ENCODE measurements at regions of chr18 and their contacts with region 1.

Region 1: GRCh38 chr18:51107082-51107481 is 77.1 kb downstream of the SMAD4 start:
- DNase-seq: no peak
- H3K4me3 Mint-ChIP-seq: no peak overlapping the region
- H3K27ac Mint-ChIP-seq: peak overlapping the region; percentile 74
- H3K4me1 Mint-ChIP-seq: peaks cover 15% of the 10 kb centered on the region
- H3K27me3 Mint-ChIP-seq: no peaks in the 10 kb centered on the region

Region 2: GRCh38 chr18:51370996-51371395 is 263.9 kb after region 1 on chr18:
- intact Hi-C with region 1: no loop called
- DNase-seq: no peak
- H3K4me3 Mint-ChIP-seq: no peak overlapping the region
- H3K27ac Mint-ChIP-seq: no peak overlapping the region
- H3K4me1 Mint-ChIP-seq: no peaks in the 10 kb centered on the region
- H3K27me3 Mint-ChIP-seq: peaks cover 17% of the 10 kb centered on the region

Region 3: GRCh38 chr18:51383116-51383515 is 276.0 kb after region 1 on chr18:
- intact Hi-C with region 1: loop called (anchors 5 kb)
- DNase-seq: no peak
- H3K4me3 Mint-ChIP-seq: no peak overlapping the region
- H3K27ac Mint-ChIP-seq: no peak overlapping the region
- H3K4me1 Mint-ChIP-seq: no peaks in the 10 kb centered on the region
- H3K27me3 Mint-ChIP-seq: peaks cover 6% of the 10 kb centered on the region

Region 4: GRCh38 chr18:51537487-51537886 is 430.4 kb after region 1 on chr18:
- intact Hi-C with region 1: loop called (anchors 10 kb)
- DNase-seq: peak; percentile 59
- H3K4me3 Mint-ChIP-seq: no peak overlapping the region
- H3K27ac Mint-ChIP-seq: no peak overlapping the region
- H3K4me1 Mint-ChIP-seq: no peaks in the 10 kb centered on the region
- H3K27me3 Mint-ChIP-seq: peaks cover 2% of the 10 kb centered on the region

Measured in activated CD4-positive, alpha-beta T cell treated with anti-CD3 and anti-CD28 coated beads, Interleukin-2, amount 10 ng/mL, durations not matched to agents 24 days and 14 days (primary cell).